Ascending aorta (tissue), 2 donors: ENCODE measurements at regions of chr17 and their contacts with region 1.

Region 1: DNA sequence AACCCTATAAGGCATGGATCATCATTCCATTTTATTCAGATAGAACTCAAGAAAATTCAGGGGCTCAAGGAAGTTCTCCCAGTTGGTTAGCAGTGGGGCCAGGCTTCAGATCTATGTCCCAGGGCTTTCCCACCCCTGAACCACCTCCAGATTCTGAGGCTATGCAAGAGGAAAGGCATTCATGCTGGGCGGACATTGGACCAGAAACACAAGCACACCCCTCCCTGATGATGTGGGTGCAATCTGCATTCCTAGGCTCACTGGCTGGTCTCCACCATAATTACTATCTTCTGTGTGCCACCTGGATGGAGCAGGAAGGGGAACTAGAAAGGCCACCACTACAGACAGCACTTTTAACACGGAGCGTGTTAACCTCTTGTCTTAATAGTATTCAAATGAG is 63.2 kb upstream of the ASIC2 start:
- DNase-seq: no peak
- H3K4me3 ChIP-seq: no peak overlapping the region
- H3K27ac ChIP-seq: no peak overlapping the region
- H3K4me1 ChIP-seq: no peaks in the 10 kb centered on the region
- H3K27me3 ChIP-seq: no peaks in the 10 kb centered on the region
- CTCF ChIP-seq: no peak

Region 2: DNA sequence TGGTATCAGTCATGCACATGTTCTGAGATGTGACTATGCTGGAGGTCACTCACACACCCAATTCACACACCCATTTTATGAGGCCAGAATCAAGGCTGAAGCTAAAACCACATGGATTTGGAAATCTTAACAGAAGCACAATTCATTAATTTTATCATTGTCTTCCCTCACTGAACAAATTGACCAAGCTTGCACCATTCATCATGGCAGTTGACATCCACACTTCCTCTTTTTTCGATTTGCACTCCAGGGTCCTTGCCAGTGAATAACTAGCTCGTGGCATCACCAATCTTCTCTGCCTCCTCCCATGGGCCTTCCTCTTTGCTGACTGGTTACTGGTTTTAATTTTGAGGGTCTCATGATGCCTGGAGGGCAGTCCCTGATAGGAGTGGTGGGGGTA is 59.9 kb after region 1 on chr17:
- intact Hi-C with region 1: loop called (anchors 10 kb)
- DNase-seq: no peak
- H3K4me3 ChIP-seq: no peak overlapping the region
- H3K27ac ChIP-seq: no peak overlapping the region
- H3K4me1 ChIP-seq: no peaks in the 10 kb centered on the region
- H3K27me3 ChIP-seq: no peaks in the 10 kb centered on the region
- CTCF ChIP-seq: no peak